ENCODE measurements at regions of chr1 and their contacts with region 1.

Region 1: DNA sequence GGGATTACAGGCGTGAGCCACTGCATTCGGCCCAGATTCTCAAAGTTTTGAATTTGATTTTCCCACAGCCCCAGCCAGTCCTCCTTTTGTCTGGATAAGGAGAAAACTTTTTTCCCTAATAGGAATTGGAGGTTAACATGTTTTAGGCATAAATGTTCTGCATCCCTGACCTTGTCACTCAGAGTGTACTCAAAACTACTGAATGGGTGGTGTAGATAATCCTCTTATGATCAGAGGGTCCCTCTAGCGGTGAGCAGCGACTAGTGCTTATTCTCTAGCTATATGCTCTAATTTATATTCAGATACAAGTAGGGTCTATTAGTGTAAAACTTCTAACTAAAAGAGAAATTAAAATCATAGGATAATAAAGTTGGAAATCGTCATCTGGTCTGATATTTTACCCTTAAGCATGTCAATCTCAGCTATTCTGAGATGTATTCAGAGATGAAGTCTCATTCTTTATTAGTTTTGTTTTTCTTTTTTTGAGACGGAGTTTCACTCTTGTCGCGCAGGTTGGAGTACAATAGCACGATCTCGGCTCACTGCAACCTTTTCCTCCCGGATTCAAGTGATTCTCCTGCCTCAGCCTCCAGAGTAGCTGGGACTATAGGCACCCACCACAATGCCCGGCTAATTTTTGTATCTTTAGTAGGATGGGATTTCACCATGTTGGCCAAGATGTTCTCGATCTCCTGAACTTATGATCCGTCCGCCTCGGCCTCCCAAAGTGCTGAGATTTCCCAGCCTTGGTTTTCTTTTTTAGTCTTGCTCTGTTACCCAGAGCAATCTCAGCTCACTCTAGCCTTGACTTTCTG is 2.7 kb upstream of the PSMD4 start:
- DNase-seq: no peak
- H3K4me3 ChIP-seq: no peak overlapping the region
- H3K27ac ChIP-seq: no peak overlapping the region
- H3K4me1 ChIP-seq: peaks cover 16% of the 10 kb centered on the region
- H3K27me3 ChIP-seq: no peaks in the 10 kb centered on the region
- CTCF ChIP-seq: peak; percentile 48 to 83 (median 62)
- POLR2A ChIP-seq: no peak

Region 2: GRCh38 chr1:151198255-151199127 is 53.4 kb before region 1 on chr1 and contains the start of gene PIP5K1A:
- intact Hi-C with region 1: loop called (anchors 2 kb)
- DNase-seq: peak; percentile 97 to 99
- H3K4me3 ChIP-seq: peak within 1 kb of the TSS; percentile 77 to 93
- H3K27ac ChIP-seq: peak within 1 kb of the TSS; percentile 88
- H3K4me1 ChIP-seq: peaks cover 52% of the 10 kb centered on the region
- H3K27me3 ChIP-seq: no peaks in the 10 kb centered on the region
- CTCF ChIP-seq: no peak
- POLR2A ChIP-seq: peak in 1 of 2 donors; percentile 78
- total RNA-seq, gene PIP5K1A: 80.3 TPM

Measured in vagina (tissue), 2 donors.